PC-3 (cell line): ENCODE measurements at regions of chr10 and their contacts with region 1.

Region 1: DNA sequence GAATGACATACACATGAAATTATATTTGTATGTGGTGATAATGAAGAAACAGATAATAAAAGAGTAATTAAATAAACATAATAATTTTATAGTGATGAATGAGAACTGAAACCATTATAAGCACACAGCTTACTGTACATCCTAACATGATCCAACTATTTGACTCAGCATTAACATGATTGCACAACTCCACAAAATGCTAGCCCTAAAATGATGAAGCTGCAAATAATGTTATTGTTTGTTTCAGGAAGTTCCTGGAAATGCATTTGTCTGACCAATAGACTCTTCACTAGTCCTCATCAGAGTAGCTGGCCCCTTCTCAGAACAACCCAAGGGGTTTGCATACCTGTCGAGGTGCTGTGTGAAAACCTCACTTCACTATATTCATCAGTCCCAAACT is 115.5 kb downstream of the RTKN2 start:
- DNase-seq: peak; percentile 97
- ATAC-seq: peak; percentile 77
- H3K4me3 ChIP-seq: no peak overlapping the region
- H3K27ac ChIP-seq: peak overlapping the region; percentile 59
- H3K4me1 ChIP-seq: peaks cover 18% of the 10 kb centered on the region
- H3K27me3 ChIP-seq: no peaks in the 10 kb centered on the region
- CTCF ChIP-seq: no peak

Region 2: GRCh38 chr10:61937631-61938351 is 215.4 kb before region 1 on chr10:
- CTCF ChIA-PET with region 1: no interaction called
- POLR2A ChIA-PET with region 1: no interaction called
- intact Hi-C with region 1: loop called (anchors 5 kb)
- DNase-seq: peak; percentile 100
- ATAC-seq: peak; percentile 55
- H3K4me3 ChIP-seq: peak overlapping the region; percentile 5; the same call in 1 of the 2 replicates
- H3K27ac ChIP-seq: peak overlapping the region; percentile 81
- H3K4me1 ChIP-seq: peaks cover 59% of the 10 kb centered on the region
- H3K27me3 ChIP-seq: no peaks in the 10 kb centered on the region
- CTCF ChIP-seq: no peak

Region 3: DNA sequence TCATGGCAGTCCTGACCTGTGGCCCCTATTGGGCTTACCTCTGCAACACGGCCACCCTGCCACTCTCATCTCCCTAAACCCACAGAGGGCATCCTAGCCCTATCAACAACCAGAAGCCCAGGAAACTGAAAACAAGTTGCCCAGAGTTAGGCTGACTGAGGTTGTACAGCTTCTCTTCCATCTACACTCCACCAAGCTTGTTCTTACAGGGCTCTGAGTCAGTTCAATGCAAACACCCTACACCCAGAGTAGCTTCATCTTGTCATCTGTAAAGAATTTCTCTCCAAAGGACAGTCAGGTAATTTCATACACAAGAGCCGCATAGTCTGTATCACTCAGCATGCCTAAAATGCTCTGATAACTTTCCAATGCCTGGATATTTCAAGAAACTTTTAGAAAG is 76.3 kb before region 1 on chr10:
- CTCF ChIA-PET with region 1: no interaction called
- POLR2A ChIA-PET with region 1: no interaction called
- intact Hi-C with region 1: loop called (anchors 2 kb)
- DNase-seq: peak; percentile 100
- ATAC-seq: peak; percentile 99
- H3K4me3 ChIP-seq: peak overlapping the region; percentile 31
- H3K27ac ChIP-seq: peak overlapping the region; percentile 61
- H3K4me1 ChIP-seq: peaks cover 45% of the 10 kb centered on the region
- H3K27me3 ChIP-seq: no peaks in the 10 kb centered on the region
- CTCF ChIP-seq: peak; percentile 95

Region 4: DNA sequence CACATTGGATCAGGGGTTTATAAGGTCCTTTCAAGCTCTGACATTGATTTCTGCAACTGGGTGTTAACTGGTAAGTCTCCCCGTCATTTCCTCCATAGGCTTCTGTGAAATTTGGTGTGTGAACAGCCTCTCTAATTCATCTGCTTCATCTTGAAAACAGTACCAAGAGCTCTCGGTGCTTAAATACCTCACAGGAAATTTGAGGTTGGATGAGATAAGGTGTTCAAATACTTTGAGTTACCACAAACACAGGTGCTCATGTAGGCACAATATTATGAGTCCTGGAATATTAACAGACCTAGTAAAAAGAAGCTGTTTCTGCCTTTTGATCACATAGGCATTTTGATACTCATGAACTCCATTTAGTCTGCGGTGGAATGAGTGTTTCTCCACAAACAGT is 30.3 kb after region 1 on chr10:
- CTCF ChIA-PET with region 1: no interaction called
- POLR2A ChIA-PET with region 1: no interaction called
- intact Hi-C with region 1: loop called (anchors 1 kb)
- DNase-seq: peak; percentile 59
- ATAC-seq: peak; percentile 21
- H3K4me3 ChIP-seq: no peak overlapping the region
- H3K27ac ChIP-seq: peak overlapping the region; percentile 16
- H3K4me1 ChIP-seq: peaks cover 20% of the 10 kb centered on the region
- H3K27me3 ChIP-seq: no peaks in the 10 kb centered on the region
- CTCF ChIP-seq: no peak

Region 5: DNA sequence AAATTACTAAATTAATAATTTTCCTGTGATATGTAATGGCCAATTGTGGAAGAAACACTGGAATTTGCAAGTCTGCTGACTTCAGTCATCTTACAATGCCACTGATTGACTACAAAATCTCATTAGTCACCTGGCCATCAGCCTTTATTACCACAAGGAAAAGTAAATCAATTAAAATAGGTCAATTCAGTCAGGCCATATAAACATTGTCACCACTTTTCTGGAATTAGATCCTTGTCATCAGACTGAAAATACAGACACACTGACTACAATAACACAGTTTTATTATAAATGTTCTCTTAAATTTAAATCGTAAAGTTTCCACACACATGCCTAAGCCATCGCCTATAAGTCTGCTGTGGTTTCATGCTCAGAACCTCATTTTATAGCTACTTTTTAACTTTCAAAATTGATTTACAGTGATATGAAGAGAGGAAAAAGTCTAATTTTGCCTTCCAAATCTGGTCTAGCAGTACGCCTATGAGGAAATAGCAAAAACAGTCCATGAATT is 61.2 kb after region 1 on chr10:
- CTCF ChIA-PET with region 1: no interaction called
- POLR2A ChIA-PET with region 1: no interaction called
- intact Hi-C with region 1: loop called (anchors 2 kb)
- DNase-seq: no peak
- ATAC-seq: peak; percentile 91
- H3K4me3 ChIP-seq: no peak overlapping the region
- H3K27ac ChIP-seq: no peak overlapping the region
- H3K4me1 ChIP-seq: no peaks in the 10 kb centered on the region
- H3K27me3 ChIP-seq: no peaks in the 10 kb centered on the region
- CTCF ChIP-seq: no peak

Region 6: DNA sequence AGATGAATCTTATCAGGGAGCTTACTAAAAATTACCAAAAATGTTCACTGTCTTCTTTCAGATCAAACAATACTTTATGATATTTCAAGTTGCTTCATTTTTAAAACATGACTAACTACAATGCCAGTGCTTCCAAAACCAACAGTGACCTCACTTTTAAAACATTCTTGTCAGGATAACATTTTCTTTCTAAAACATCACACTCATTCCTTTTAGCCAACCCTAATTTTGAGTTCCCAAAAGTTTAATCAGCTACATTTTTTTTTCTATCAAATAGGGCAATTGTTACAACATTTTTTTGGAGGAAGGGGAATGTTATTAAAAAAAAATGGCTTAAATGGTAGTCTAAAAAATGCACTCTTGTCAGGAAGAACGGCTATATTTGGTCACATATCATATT is 78.2 kb after region 1 on chr10:
- CTCF ChIA-PET with region 1: no interaction called
- POLR2A ChIA-PET with region 1: no interaction called
- intact Hi-C with region 1: loop called (anchors 1 kb)
- DNase-seq: peak; percentile 99
- ATAC-seq: peak; percentile 76
- H3K4me3 ChIP-seq: peak overlapping the region; percentile 25
- H3K27ac ChIP-seq: peak overlapping the region; percentile 73
- H3K4me1 ChIP-seq: peaks cover 55% of the 10 kb centered on the region
- H3K27me3 ChIP-seq: no peaks in the 10 kb centered on the region
- CTCF ChIP-seq: no peak

Region 7: GRCh38 chr10:62384057-62384446 is 230.9 kb after region 1 on chr10:
- CTCF ChIA-PET with region 1: no interaction called
- POLR2A ChIA-PET with region 1: no interaction called
- intact Hi-C with region 1: loop called (anchors 5 kb)
- DNase-seq: peak; percentile 100
- ATAC-seq: peak; percentile 74
- H3K4me3 ChIP-seq: peak overlapping the region; percentile 36
- H3K27ac ChIP-seq: peak overlapping the region; percentile 79
- H3K4me1 ChIP-seq: peaks cover 88% of the 10 kb centered on the region
- H3K27me3 ChIP-seq: no peaks in the 10 kb centered on the region
- CTCF ChIP-seq: no peak